ENCODE measurements at regions of chr10 and their contacts with region 1.

Region 1: GRCh38 chr10:61592581-61592980 is 70.1 kb upstream of the CABCOCO1 start:
- DNase-seq: peak; percentile 21 to 73 (median 45)
- ATAC-seq: peak; percentile 94
- H3K4me3 ChIP-seq: no peak overlapping the region
- H3K27ac ChIP-seq: no peak overlapping the region
- H3K4me1 ChIP-seq: peaks cover 0 to 12% of the 10 kb centered on the region in 2 experiments; a peak in 3 of 5 replicates
- H3K27me3 ChIP-seq: no peaks in the 10 kb centered on the region
- CTCF ChIP-seq: peak; percentile 74 to 77 (median 75)
- EP300 ChIP-seq: no peak
- POLR2A ChIP-seq: no peak
- RAD21 ChIP-seq: peak; percentile 77 to 92

Region 2: DNA sequence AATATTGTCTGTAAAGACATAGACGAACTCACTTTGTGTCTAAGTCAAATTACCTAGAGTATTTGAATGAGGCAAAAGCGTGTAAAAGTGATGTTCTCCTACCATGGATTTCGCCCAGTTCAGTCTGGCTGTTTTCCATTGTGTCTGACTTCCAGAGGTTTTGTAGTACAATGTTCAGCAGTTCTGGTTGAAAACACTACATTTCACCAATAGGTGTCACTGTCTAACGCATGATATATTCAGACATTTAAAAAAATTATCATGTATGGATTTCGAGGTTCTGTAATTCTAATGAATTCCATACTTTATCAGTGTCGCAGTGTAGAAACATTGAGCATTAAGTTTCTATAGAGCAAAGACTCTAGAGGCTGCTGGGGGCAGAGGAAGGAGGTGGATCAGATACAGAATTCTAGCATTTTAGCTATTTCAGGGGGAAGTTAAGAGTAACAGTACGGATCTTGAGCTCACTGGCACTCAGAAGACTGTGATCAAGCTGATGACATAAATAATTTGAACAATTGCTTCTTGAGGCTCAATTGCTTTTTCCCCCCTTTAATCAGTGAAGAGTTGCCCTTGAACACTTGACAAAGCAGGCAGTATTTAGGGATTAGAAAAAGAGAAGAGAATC is 451.7 kb before region 1 on chr10:
- CTCF ChIA-PET with region 1: no interaction called
- POLR2A ChIA-PET with region 1: no interaction called
- in situ Hi-C with region 1: no loop called
- intact Hi-C with region 1: loop called (anchors 10 kb)
- DNase-seq: peak; percentile 27 to 62 (median 38)
- ATAC-seq: peak; percentile 83
- H3K4me3 ChIP-seq: no peak overlapping the region
- H3K27ac ChIP-seq: no peak overlapping the region
- H3K4me1 ChIP-seq: no peaks in the 10 kb centered on the region
- H3K27me3 ChIP-seq: no peaks in the 10 kb centered on the region
- CTCF ChIP-seq: peak; percentile 52 to 79 (median 67); a peak in 5 of 6 replicates
- EP300 ChIP-seq: no peak
- POLR2A ChIP-seq: no peak
- RAD21 ChIP-seq: peak; percentile 70 to 79

Region 3: DNA sequence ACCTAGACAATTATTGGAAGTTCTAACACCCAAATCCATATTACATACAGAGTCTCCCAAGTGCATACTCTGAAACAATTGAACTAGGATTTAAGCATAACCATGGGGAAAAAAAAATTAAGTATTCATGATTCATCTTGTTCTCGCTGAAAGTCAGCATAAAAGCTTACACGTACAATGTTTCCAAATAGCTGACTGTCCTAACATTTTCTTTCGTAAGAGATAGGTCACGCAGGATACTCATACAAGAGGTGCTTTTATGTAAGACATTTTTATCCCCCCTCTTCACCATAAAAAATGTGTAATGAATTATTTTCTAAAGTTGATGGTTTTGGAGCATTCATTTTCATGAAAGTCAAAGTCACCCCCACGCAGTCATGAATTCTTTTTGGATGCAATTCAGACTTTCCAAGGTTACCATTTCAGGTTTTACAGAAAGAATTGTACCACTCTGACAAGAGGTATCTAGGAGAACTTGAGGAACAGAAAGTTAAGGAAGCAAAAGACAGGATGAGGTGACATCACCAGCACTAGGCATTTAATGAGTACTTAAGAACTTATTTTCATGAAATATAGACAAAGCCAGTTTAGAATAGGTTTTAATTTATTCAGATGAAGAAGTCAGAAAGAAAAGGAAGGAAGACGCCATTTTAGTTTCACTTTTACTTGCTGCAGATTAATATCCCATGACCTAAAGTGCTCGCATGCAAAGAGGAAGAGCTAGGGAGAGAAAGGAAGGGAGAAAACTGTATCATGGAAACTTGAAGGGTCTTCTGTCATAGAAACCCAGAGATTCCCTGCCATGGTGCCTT is 195.2 kb before region 1 on chr10:
- CTCF ChIA-PET with region 1: no interaction called
- POLR2A ChIA-PET with region 1: no interaction called
- in situ Hi-C with region 1: no loop called
- intact Hi-C with region 1: no loop called
- DNase-seq: peak in 1 of 4 experiments; percentile 18
- ATAC-seq: peak; percentile 64; the same call in 2 of the 3 replicates
- H3K4me3 ChIP-seq: peak overlapping the region; percentile 7; the same call in 1 of the 2 replicates
- H3K27ac ChIP-seq: no peak overlapping the region
- H3K4me1 ChIP-seq: no peaks in the 10 kb centered on the region; a peak in 1 of 5 replicates
- H3K27me3 ChIP-seq: no peaks in the 10 kb centered on the region
- CTCF ChIP-seq: no peak
- EP300 ChIP-seq: no peak
- POLR2A ChIP-seq: no peak
- RAD21 ChIP-seq: no peak

Region 4: DNA sequence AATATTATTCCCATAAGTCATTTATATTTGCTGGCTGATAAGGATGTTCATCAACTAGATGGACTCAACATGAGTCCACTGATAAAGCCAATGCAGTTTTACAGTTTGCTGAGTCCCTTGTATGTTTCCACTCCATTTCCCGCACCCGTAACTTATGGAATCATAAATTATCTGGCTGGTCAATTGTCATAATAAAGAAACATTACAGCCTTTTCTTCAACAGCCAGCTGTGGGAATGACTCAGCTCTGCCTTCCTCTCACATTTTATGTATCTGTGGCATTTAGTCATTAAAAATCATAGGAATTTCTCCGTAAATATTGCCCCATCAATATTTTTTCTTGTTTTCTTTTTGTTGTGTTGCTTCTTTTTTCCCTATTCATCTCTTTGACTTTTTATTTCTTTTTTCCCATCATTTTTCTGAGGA is 117.1 kb before region 1 on chr10:
- CTCF ChIA-PET with region 1: no interaction called
- POLR2A ChIA-PET with region 1: no interaction called
- in situ Hi-C with region 1: no loop called
- intact Hi-C with region 1: loop called (anchors 5 kb)
- DNase-seq: peak in 2 of 4 experiments; percentile 63 to 79
- ATAC-seq: peak; percentile 67
- H3K4me3 ChIP-seq: no peak overlapping the region
- H3K27ac ChIP-seq: peak overlapping the region; percentile 41; the same call in 1 of the 3 replicates
- H3K4me1 ChIP-seq: peaks cover 0 to 5% of the 10 kb centered on the region in 2 experiments; a peak in 2 of 5 replicates
- H3K27me3 ChIP-seq: no peaks in the 10 kb centered on the region
- CTCF ChIP-seq: no peak
- EP300 ChIP-seq: peak; percentile 81
- POLR2A ChIP-seq: no peak
- RAD21 ChIP-seq: no peak; a peak in 1 of 4 replicates

Region 5: GRCh38 chr10:61606951-61607907 is 14.6 kb after region 1 on chr10:
- CTCF ChIA-PET with region 1: no interaction called
- POLR2A ChIA-PET with region 1: no interaction called
- in situ Hi-C with region 1: no loop called
- intact Hi-C with region 1: no loop called
- DNase-seq: peak; percentile 20 to 32 (median 27)
- ATAC-seq: peak; percentile 75
- H3K4me3 ChIP-seq: no peak overlapping the region
- H3K27ac ChIP-seq: no peak overlapping the region
- H3K4me1 ChIP-seq: no peaks in the 10 kb centered on the region
- H3K27me3 ChIP-seq: no peaks in the 10 kb centered on the region
- CTCF ChIP-seq: peak; percentile 47 to 65 (median 59); a peak in 5 of 6 replicates
- EP300 ChIP-seq: no peak
- POLR2A ChIP-seq: no peak
- RAD21 ChIP-seq: peak in 1 of 2 experiments; percentile 55; a peak in 3 of 4 replicates